Activated T-helper 1 cell treated with anti-CD3 and anti-CD28 coated beads, Interleukin-12 subunit alpha, Interleukin-12 subunit beta, Interleukin-2, Interleukin-4 antibody, amounts not matched to agents 30 ng/mL and 10 ng/mL and 1 ng/mL, durations not matched to agents 14 hours and 24 hours and 36 hours (primary cell): ENCODE measurements at regions of chr12 and their contacts with region 1.

Region 1: DNA sequence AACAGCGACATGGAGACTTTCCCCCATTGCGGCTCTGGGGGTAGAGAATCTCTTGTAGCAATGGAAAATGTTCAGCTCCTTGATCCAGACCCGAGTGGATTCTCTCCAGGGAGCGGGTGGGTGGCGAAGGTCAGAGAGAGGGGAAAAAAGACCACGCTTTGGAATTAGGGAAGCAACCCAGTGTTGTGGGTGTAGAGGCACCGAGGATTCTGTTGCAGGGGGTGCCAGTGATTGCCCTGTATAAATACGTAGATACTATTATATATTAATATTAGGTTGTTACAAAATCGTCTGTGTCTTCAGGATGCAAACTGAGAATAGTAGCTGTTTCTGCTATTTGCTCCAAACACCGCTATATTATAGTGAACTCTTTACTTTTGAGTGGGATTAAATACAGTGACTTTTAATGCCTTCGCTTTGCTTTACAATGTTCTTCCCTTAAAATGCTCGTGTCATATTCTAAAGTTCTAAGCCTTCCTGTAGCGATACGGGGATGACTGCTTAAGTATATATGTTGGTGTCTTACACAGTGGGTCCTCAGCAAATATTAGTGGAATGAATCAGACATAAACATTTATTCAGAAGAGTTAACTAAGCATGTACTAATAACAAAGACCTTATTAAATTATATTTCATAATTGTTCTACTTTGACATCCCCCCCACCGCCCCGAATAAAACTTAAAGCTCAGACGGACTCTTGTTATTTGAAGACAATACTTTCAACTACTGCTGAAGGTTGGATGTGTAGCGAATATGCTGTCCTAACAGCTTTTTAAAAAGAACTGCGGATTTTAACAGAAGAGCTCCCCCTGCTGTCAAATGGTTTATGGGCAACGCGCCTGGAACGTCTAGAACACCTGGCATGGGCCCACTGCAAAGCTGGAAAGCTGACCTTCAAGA is 136.4 kb upstream of the KRAS start:
- DNase-seq: peak; percentile 73
- H3K4me3 Mint-ChIP-seq: peak overlapping the region; percentile 89
- H3K27ac Mint-ChIP-seq: peak overlapping the region; percentile 98
- H3K4me1 Mint-ChIP-seq: peaks cover 64% of the 10 kb centered on the region
- H3K27me3 Mint-ChIP-seq: peaks cover 2% of the 10 kb centered on the region

Region 2: GRCh38 chr12:25195056-25195971 is 191.8 kb before region 1 on chr12 and contains the starts of genes DNAI7 and ETFRF1:
- intact Hi-C with region 1: loop called (anchors 1 kb)
- DNase-seq: peak; percentile 92
- H3K4me3 Mint-ChIP-seq: peak within 1 kb of the TSS; percentile 98
- H3K27ac Mint-ChIP-seq: peak within 1 kb of the TSS; percentile 95
- H3K4me1 Mint-ChIP-seq: peaks cover 23% of the 10 kb centered on the region
- H3K27me3 Mint-ChIP-seq: peaks cover 2% of the 10 kb centered on the region
- total RNA-seq, gene DNAI7: 0.23 TPM in 1 of 2 replicates, not detected in the other
- total RNA-seq, gene ETFRF1: 9.7 and 10.4 TPM in 2 replicates

Region 3: DNA sequence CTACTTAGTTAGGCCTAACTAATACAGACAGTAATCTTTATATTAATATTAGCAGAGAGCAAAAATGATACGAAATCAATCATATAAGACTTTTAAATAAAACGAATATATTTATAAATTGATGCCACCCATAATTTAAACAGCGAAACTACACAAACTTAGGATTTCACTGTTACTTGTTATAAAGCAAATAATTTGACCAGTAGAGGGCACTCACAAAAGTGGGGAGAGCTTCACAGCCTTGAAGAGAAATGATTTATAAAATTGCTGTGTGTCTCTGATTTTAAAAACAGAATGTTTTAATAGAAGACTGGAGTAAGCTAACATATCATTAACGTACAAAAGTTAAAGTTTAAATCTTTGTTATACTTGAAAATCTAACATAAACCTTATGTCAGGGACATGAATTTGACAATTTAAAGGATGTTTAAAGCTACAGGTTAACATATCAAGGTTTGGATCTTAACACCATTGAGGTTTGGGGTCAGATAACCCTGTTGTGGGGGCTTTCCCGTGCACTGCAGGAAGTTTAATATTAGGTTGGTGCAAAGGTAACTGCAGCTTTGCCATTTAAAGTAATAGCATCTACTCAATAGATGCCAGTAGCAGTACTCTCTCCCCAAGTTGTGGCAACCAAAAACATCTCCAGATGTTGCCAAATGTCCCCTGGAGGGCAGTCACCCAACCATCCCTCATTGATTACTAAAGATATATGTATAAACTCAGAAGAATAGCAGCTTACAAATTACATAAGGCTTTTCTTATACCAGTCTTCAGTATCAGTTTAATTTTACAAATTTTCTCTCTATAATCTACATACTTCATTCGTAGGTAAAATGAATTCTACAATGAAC is 145.7 kb before region 1 on chr12:
- intact Hi-C with region 1: loop called (anchors 1 kb)
- DNase-seq: no peak
- H3K4me3 Mint-ChIP-seq: no peak overlapping the region
- H3K27ac Mint-ChIP-seq: no peak overlapping the region
- H3K4me1 Mint-ChIP-seq: peaks cover 29% of the 10 kb centered on the region
- H3K27me3 Mint-ChIP-seq: no peaks in the 10 kb centered on the region

Region 4: DNA sequence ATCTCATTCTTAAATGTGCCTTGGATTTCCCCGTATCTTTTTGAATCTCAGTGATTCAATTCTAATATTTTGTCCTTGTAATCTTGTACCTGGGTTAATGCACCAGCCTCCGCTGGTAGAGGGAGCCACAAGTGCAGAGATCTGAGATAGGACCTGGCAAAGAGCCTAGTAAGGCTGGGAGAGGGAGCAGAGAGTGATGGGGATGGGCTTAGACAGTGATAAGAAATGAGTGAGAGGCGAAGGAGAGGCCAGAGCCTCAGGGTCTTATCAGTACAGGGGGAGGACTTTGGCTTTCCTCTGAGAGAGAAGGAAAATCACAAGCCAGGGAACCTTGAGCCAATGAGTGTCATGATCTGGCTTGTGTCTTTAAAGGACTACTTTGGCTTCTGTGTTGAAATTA is 196.5 kb after region 1 on chr12:
- intact Hi-C with region 1: loop called (anchors 2 kb)
- DNase-seq: no peak
- H3K4me3 Mint-ChIP-seq: no peak overlapping the region
- H3K27ac Mint-ChIP-seq: no peak overlapping the region
- H3K4me1 Mint-ChIP-seq: peaks cover 6% of the 10 kb centered on the region
- H3K27me3 Mint-ChIP-seq: no peaks in the 10 kb centered on the region